Ovary (tissue), 10 donors: ENCODE measurements at regions of chrX and their contacts with region 1.

Region 1: GRCh38 chrX:149114001-149114400 is 391.1 kb downstream of the IDS start:
- DNase-seq: no peak
- H3K4me3 ChIP-seq: no peak overlapping the region
- H3K27ac ChIP-seq: no peak overlapping the region
- H3K4me1 ChIP-seq: no peaks in the 10 kb centered on the region
- H3K27me3 ChIP-seq: no peaks in the 10 kb centered on the region
- CTCF ChIP-seq: no peak
- EP300 ChIP-seq: no peak
- POLR2A ChIP-seq: no peak

Region 2: GRCh38 chrX:148885207-148885606 is 228.8 kb before region 1 on chrX:
- intact Hi-C with region 1: loop called in 1 of 4 experiments (anchors 10 kb)
- DNase-seq: no peak
- H3K4me3 ChIP-seq: no peak overlapping the region
- H3K27ac ChIP-seq: no peak overlapping the region
- H3K4me1 ChIP-seq: no peaks in the 10 kb centered on the region
- H3K27me3 ChIP-seq: no peaks in the 10 kb centered on the region
- CTCF ChIP-seq: no peak
- EP300 ChIP-seq: no peak
- POLR2A ChIP-seq: no peak

Region 3: DNA sequence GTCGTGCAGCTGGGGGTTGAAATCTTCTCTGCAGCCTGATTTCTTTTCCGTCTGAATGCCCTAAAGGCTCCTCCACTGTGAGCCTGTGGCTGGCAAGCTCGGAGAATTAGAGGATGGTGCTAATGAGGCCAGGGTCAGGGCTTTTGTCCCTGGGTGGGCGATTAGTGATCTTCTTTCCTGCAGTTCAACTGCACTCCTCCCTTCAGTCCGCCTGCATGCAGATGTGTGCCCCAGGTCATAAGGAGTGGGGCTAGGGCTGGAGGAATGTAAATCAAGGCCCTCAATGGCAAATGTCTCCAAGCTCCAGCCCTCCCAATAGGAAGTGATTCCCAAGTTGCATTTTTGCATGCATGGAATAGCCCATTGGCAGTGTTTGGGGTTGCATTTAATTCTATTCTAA is 208.6 kb before region 1 on chrX:
- intact Hi-C with region 1: no loop called
- DNase-seq: no peak
- H3K4me3 ChIP-seq: no peak overlapping the region
- H3K27ac ChIP-seq: no peak overlapping the region
- H3K4me1 ChIP-seq: no peaks in the 10 kb centered on the region
- H3K27me3 ChIP-seq: peaks cover 2% of the 10 kb centered on the region
- CTCF ChIP-seq: no peak
- EP300 ChIP-seq: no peak
- POLR2A ChIP-seq: no peak